AG04449 (cell line): ENCODE measurements at regions of chr1 and their contacts with region 1.

Region 1: DNA sequence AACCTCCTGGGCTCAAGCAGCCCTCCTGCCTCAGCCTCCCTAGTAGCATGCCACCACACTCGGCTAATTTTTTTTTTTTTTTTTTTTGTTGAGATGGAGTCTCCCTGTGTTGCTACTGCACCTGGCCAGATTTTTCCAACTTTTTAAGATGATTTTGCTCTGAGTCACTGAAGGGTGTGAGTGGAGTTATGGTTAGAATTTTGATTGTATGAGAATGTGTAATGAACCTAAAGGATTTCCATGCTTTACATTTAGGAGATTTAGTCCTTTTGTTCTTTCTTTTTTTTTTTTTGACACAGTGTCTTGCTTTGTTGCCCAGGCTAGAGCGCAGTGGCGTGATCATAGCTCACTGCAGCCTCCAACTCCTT is 12.3 kb downstream of the SARS1 start:
- DNase-seq: no peak
- H3K4me3 ChIP-seq: no peak overlapping the region
- CTCF ChIP-seq: no peak

Region 2: DNA sequence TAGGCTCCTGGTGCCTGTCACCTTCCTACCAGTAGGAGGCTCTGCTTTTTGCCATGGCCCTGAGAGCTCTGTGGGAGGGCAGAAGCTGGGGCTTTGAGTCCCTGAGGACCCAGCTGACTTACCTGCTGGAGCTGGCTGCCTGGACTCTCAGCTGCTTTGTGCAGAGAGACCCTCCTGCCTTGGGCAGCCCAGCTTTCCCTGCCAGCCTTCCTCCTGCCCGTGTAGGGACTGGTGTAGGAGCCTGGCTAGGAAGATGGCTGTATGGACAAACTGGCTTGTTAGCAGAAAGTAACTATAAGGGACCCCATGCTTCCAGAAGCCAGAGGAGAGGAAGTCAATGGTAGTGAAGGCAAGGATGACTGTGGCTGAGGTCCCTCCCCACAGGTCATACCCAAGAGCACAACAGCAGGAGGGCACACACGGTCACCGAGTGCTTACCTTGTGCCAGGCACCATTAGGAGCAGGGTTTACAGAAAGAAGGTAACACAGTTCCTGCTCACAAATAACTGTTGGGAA is 13.6 kb after region 1 on chr1:
- CTCF ChIA-PET with region 1: interaction called, 16 read pairs
- POLR2A ChIA-PET with region 1: interaction called, 4 read pairs
- DNase-seq: no peak
- H3K4me3 ChIP-seq: no peak overlapping the region
- CTCF ChIP-seq: peak; percentile 62